ENCODE measurements at regions of chr1 and their contacts with region 1.

Region 1: DNA sequence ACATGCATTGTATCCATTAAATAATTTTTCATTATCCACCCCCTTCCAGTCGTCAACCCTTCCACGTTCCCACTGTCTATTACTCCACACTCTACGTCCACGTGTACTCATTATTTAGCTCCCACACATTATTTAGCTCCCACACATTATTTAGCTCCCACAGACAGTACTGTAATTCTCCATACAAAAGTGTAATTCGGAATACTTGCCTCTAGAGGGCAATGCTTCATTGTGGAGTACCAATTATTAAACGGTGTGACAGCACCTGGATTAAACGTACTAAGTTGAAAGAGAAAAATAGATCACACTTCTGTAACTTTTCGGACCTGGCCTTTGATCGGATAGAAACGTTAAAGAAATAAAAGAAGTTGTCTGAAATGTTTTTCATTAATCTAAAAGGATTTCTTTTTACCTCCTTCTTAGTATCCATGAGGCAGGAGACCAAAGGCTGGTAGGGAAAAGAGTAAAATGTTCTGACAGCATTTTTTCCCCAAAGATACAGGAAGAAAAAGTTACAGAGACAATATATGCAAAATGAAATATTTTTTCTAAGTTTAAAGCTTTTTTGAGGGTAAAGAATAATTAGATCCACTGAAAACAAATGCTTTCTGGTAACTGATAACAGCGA is 99.2 kb downstream of the LHX8 start:
- DNase-seq: peak; percentile 62
- H3K4me3 Mint-ChIP-seq: no peak overlapping the region
- H3K27ac Mint-ChIP-seq: no peak overlapping the region
- H3K4me1 Mint-ChIP-seq: no peaks in the 10 kb centered on the region
- H3K27me3 Mint-ChIP-seq: peaks cover 6% of the 10 kb centered on the region
- CTCF ChIP-seq: peak; percentile 47

Region 2: GRCh38 chr1:75203415-75204277 is 29.8 kb before region 1 on chr1:
- CTCF ChIA-PET with region 1: interaction called, 11 read pairs
- POLR2A ChIA-PET with region 1: no interaction called
- intact Hi-C with region 1: no loop called
- DNase-seq: peak; percentile 52
- H3K4me3 Mint-ChIP-seq: no peak overlapping the region
- H3K27ac Mint-ChIP-seq: no peak overlapping the region
- H3K4me1 Mint-ChIP-seq: peaks cover 3% of the 10 kb centered on the region
- H3K27me3 Mint-ChIP-seq: peaks cover 7% of the 10 kb centered on the region
- CTCF ChIP-seq: peak; percentile 79

Region 3: GRCh38 chr1:75214017-75214416 is 19.4 kb before region 1 on chr1:
- CTCF ChIA-PET with region 1: interaction called, 10 read pairs
- POLR2A ChIA-PET with region 1: interaction called, 3 read pairs
- intact Hi-C with region 1: no loop called
- DNase-seq: no peak
- H3K4me3 Mint-ChIP-seq: no peak overlapping the region
- H3K27ac Mint-ChIP-seq: no peak overlapping the region
- H3K4me1 Mint-ChIP-seq: no peaks in the 10 kb centered on the region
- H3K27me3 Mint-ChIP-seq: peaks cover 17% of the 10 kb centered on the region
- CTCF ChIP-seq: no peak

Region 4: GRCh38 chr1:75220072-75220471 is 13.3 kb before region 1 on chr1:
- CTCF ChIA-PET with region 1: interaction called, 21 read pairs
- POLR2A ChIA-PET with region 1: interaction called, 3 read pairs
- intact Hi-C with region 1: no loop called
- DNase-seq: no peak
- H3K4me3 Mint-ChIP-seq: no peak overlapping the region
- H3K27ac Mint-ChIP-seq: no peak overlapping the region
- H3K4me1 Mint-ChIP-seq: no peaks in the 10 kb centered on the region
- H3K27me3 Mint-ChIP-seq: peaks cover 17% of the 10 kb centered on the region
- CTCF ChIP-seq: no peak

Region 5: DNA sequence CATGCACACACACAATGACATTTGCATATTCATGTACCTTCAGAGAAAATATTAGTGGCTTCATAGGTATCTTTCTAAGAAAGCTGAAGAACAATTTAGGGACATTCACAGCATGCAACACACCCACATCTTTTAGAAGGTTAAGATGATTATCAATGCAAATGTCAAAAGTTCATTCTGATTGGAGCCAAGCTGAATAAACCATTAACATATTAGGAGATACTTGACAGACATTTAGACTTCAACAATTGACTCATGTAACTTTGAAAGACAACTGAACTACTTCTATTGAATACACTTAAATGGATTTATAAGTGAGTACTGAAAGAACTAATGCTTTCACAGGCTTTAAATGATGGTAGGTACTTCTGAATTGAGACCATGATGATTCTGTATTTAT is 11.8 kb after region 1 on chr1:
- CTCF ChIA-PET with region 1: interaction called, 25 read pairs
- POLR2A ChIA-PET with region 1: no interaction called
- intact Hi-C with region 1: no loop called
- DNase-seq: no peak
- H3K4me3 Mint-ChIP-seq: no peak overlapping the region
- H3K27ac Mint-ChIP-seq: no peak overlapping the region
- H3K4me1 Mint-ChIP-seq: no peaks in the 10 kb centered on the region
- H3K27me3 Mint-ChIP-seq: no peaks in the 10 kb centered on the region
- CTCF ChIP-seq: no peak

Measured in MCF 10A (cell line).